Mammary epithelial cell (primary cell): ENCODE measurements at regions of chr9 and their contacts with region 1.

Region 1: GRCh38 chr9:129202613-129203555 is 24.8 kb upstream of the IER5L start:
- DNase-seq: peak; percentile 59
- H3K4me3 ChIP-seq: peak overlapping the region; percentile 59 to 84 (median 62)
- H3K27ac ChIP-seq: peak overlapping the region; percentile 65
- H3K4me1 ChIP-seq: peaks cover 6% of the 10 kb centered on the region
- H3K27me3 ChIP-seq: no peaks in the 10 kb centered on the region
- CTCF ChIP-seq: no peak

Region 2: GRCh38 chr9:129258124-129258822 is 55.4 kb after region 1 on chr9:
- CTCF ChIA-PET with region 1: no interaction called
- dilution Hi-C with region 1: no loop called
- in situ Hi-C with region 1: no loop called
- intact Hi-C with region 1: loop called (anchors 5 kb)
- DNase-seq: peak; percentile 85
- H3K4me3 ChIP-seq: peak overlapping the region; percentile 19 to 29 (median 28)
- H3K27ac ChIP-seq: no peak overlapping the region
- H3K4me1 ChIP-seq: peaks cover 15% of the 10 kb centered on the region
- H3K27me3 ChIP-seq: no peaks in the 10 kb centered on the region
- CTCF ChIP-seq: no peak

Region 3: GRCh38 chr9:129270903-129271431 is 68.1 kb after region 1 on chr9:
- CTCF ChIA-PET with region 1: no interaction called
- dilution Hi-C with region 1: no loop called
- in situ Hi-C with region 1: no loop called
- intact Hi-C with region 1: no loop called
- DNase-seq: peak; percentile 82
- H3K4me3 ChIP-seq: no peak overlapping the region
- H3K27ac ChIP-seq: peak overlapping the region; percentile 16
- H3K4me1 ChIP-seq: peaks cover 23% of the 10 kb centered on the region
- H3K27me3 ChIP-seq: no peaks in the 10 kb centered on the region
- CTCF ChIP-seq: no peak